ENCODE measurements at regions of chr17 and their contacts with region 1.

Region 1: GRCh38 chr17:78140169-78140976 is 5.8 kb upstream of the C17orf99 start:
- DNase-seq: peak; percentile 94 to 98 (median 98)
- H3K4me3 ChIP-seq: peak overlapping the region in 1 of 3 experiments; percentile 50
- H3K4me3 Mint-ChIP-seq: peak overlapping the region; percentile 52 to 78
- H3K27ac ChIP-seq: peak overlapping the region; percentile 39 to 49
- H3K27ac Mint-ChIP-seq: peak overlapping the region; percentile 82 to 96 (median 90)
- H3K4me1 ChIP-seq: peaks cover 81 to 94% of the 10 kb centered on the region in 2 donors
- H3K4me1 Mint-ChIP-seq: peaks cover 81% of the 10 kb centered on the region
- H3K27me3 ChIP-seq: no peaks in the 10 kb centered on the region
- H3K27me3 Mint-ChIP-seq: peaks cover 0 to 5% (median 0%) of the 10 kb centered on the region in 3 donors
- CTCF ChIP-seq: no peak

Region 2: GRCh38 chr17:78104540-78104941 is 35.8 kb before region 1 on chr17:
- intact Hi-C with region 1: no loop called
- DNase-seq: no peak
- H3K4me3 ChIP-seq: no peak overlapping the region
- H3K4me3 Mint-ChIP-seq: no peak overlapping the region
- H3K27ac ChIP-seq: no peak overlapping the region
- H3K27ac Mint-ChIP-seq: no peak overlapping the region
- H3K4me1 ChIP-seq: no peaks in the 10 kb centered on the region
- H3K4me1 Mint-ChIP-seq: no peaks in the 10 kb centered on the region
- H3K27me3 ChIP-seq: no peaks in the 10 kb centered on the region
- H3K27me3 Mint-ChIP-seq: no peaks in the 10 kb centered on the region
- CTCF ChIP-seq: no peak

Region 3: DNA sequence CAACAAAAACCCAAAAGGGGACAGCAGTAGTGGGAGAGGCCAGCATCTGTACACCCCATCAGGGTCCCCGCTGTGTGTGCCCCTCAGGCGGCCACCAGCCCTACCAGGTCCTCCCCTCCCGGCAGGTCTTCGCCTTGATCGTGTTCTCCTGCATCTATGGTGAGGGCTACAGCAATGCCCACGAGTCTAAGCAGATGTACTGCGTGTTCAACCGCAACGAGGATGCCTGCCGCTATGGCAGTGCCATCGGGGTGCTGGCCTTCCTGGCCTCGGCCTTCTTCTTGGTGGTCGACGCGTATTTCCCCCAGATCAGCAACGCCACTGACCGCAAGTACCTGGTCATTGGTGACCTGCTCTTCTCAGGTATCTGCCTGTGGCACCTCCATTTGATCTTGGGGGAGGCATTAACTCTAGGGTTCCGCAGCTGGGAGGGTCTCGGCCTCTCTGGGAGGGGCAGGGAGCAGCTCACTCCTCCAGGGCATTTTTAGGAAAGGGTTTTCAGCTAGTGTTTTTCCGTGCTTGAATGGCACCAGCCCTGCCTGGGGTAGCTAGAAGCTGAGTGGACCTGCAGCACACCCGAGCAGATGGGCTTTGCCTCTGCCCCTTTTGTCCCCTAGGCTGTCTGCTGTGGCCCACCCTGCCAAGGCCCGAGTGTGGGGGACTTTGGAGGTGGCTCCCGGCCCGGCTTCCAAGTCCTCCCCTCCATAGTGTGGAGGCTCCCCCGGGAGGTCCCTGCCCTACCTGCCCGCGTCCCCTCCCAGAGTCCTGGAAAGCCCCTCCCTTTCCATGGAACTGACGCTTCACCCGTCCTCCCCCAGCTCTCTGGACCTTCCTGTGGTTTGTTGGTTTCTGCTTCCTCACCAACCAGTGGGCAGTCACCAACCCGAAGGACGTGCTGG is 30.6 kb after region 1 on chr17:
- intact Hi-C with region 1: loop called (anchors 1 to 5 kb)
- DNase-seq: peak in 1 of 3 donors; percentile 32
- H3K4me3 ChIP-seq: peak overlapping the region in 1 of 3 experiments; percentile 85
- H3K4me3 Mint-ChIP-seq: peak overlapping the region; percentile 34 to 46
- H3K27ac ChIP-seq: peak overlapping the region; percentile 14 to 27
- H3K27ac Mint-ChIP-seq: peak overlapping the region in 5 of 7 donors; percentile 46 to 97 (median 93)
- H3K4me1 ChIP-seq: peaks cover 74% of the 10 kb centered on the region in 2 donors
- H3K4me1 Mint-ChIP-seq: peaks cover 70% of the 10 kb centered on the region
- H3K27me3 ChIP-seq: no peaks in the 10 kb centered on the region
- H3K27me3 Mint-ChIP-seq: no peaks in the 10 kb centered on the region
- CTCF ChIP-seq: no peak

Region 4: DNA sequence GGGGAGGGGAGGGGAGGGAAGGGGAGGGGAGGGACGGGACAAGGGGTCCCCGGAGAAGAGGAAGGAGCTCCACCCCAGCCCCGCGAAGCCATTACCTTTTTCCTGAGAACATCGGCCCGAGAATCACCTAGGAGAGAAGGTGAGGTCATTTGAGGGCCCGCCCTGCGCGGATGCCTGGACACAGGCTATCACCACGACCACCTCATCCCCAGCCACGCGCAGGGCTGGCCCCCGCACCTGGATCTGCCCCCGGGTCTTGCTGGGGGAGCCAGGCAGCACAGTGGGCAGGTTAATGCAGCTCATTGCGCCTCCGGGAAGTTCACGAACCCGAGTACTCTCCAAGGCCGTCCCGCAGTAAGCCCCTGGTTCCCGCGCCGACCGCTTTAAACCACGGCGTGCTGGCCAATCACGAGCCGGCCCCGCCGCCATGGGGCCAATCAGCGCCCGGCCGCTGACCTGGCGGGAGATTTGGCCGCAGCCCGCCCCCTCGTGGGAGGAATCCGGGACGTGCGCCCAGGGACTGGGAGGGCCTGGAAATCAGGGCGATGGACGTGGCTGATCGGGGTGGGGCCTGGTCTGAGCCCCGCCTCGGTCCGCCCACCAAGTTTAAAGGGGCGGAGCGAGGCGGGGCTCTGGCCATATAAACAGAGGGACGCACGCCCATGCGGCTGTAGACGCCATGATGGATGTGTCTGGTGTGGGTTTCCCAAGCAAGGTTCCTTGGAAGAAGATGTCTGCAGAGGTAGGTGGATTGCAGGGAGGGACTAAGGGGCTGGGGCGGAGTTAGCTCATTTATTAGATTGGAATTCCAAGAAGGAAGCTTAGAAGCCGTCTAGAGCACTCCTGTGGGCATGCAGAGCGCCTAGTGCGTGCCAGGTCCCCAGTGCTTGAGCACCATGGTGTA is 46.6 kb after region 1 on chr17 and contains the starts of genes AFMID and TK1:
- intact Hi-C with region 1: loop called (anchors 1 to 5 kb)
- DNase-seq: peak; percentile 94
- H3K4me3 ChIP-seq: peak within 1 kb of the TSS; percentile 51 to 84 (median 66)
- H3K4me3 Mint-ChIP-seq: peak within 1 kb of the TSS; percentile 78 to 95
- H3K27ac ChIP-seq: peak within 1 kb of the TSS in 1 of 2 donors; percentile 67
- H3K27ac Mint-ChIP-seq: peak within 1 kb of the TSS; percentile 69 to 90 (median 87)
- H3K4me1 ChIP-seq: peaks cover 33 to 44% of the 10 kb centered on the region in 2 donors
- H3K4me1 Mint-ChIP-seq: peaks cover 37% of the 10 kb centered on the region
- H3K27me3 ChIP-seq: no peaks in the 10 kb centered on the region
- H3K27me3 Mint-ChIP-seq: peaks cover 0 to 2% (median 0%) of the 10 kb centered on the region in 3 donors
- CTCF ChIP-seq: peak; percentile 44
- polyA plus RNA-seq, gene AFMID: 7.1 to 45.7 (median 14.2) TPM
- polyA plus RNA-seq, gene TK1: 0.67 to 2.0 (median 1.4) TPM

Measured in CD14-positive monocyte (primary cell).